ENCODE measurements at regions of chr4 and their contacts with region 1.

Region 1: GRCh38 chr4:3318561-3319021 is 25.8 kb downstream of the RGS12 start:
- DNase-seq: peak; percentile 54 to 91
- H3K4me3 ChIP-seq: no peak overlapping the region
- H3K27ac ChIP-seq: 0 out of 2 replicates have a peak overlapping the region, but pooled peaks have one; percentile 39
- H3K4me1 ChIP-seq: peaks cover 0 to 5% (median 1%) of the 10 kb centered on the region in 4 experiments; a peak in 2 of 7 replicates
- H3K27me3 ChIP-seq: no peaks in the 10 kb centered on the region
- CTCF ChIP-seq: peak in 2 of 3 experiments; percentile 99; a peak in 3 of 4 replicates
- EP300 ChIP-seq: peak in 1 of 2 experiments; percentile 55; a peak in 1 of 3 replicates
- POLR2A ChIP-seq: no peak
- RAD21 ChIP-seq: peak; percentile 73 to 78

Region 2: DNA sequence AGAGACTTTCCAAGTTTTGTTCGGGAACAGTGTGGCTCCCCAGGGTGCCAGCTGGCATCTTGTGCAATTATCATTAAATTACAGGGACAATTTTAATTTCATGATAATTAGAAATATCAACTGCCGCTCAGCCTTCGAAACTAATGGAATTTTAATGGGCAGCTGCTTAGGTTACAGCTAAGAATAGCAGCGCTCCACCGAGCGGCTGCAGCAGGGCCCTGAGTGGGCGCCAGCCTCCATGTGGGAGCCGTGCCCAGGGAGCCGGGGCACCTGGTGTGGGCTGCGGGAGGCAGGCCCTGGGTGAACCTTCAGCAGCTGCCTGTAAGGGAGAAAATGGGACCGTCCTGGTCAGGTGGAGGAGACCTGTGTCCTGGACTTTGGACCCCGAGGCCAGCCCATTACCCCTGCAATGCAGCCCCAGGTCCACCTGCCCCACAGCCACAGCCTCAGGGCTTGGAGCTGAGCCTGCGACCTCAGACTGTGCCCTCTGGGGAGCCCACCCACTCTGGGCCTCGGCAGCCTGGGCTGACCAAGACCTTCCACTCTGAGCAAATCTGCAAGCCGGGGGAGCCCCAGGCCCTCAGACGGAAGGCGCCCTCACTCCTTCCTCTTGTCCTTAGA is 48.5 kb before region 1 on chr4:
- CTCF ChIA-PET with region 1: interaction called, 10 read pairs
- POLR2A ChIA-PET with region 1: no interaction called
- DNase-seq: peak in 1 of 2 experiments; percentile 44
- H3K4me3 ChIP-seq: no peak overlapping the region
- H3K27ac ChIP-seq: no peak overlapping the region
- H3K4me1 ChIP-seq: peaks cover 0 to 6% (median 0%) of the 10 kb centered on the region in 4 experiments; a peak in 1 of 7 replicates
- H3K27me3 ChIP-seq: no peaks in the 10 kb centered on the region
- CTCF ChIP-seq: no peak
- EP300 ChIP-seq: no peak
- POLR2A ChIP-seq: no peak
- RAD21 ChIP-seq: no peak

Region 3: GRCh38 chr4:3305598-3306371 is 12.8 kb before region 1 on chr4:
- CTCF ChIA-PET with region 1: interaction called, 31 read pairs
- POLR2A ChIA-PET with region 1: interaction called, 3 read pairs
- DNase-seq: no peak
- H3K4me3 ChIP-seq: no peak overlapping the region
- H3K27ac ChIP-seq: no peak overlapping the region
- H3K4me1 ChIP-seq: peaks cover 0 to 18% (median 6%) of the 10 kb centered on the region in 4 experiments; a peak in 4 of 7 replicates
- H3K27me3 ChIP-seq: no peaks in the 10 kb centered on the region
- CTCF ChIP-seq: no peak
- EP300 ChIP-seq: no peak
- POLR2A ChIP-seq: no peak
- RAD21 ChIP-seq: no peak

Region 4: GRCh38 chr4:3346146-3346545 is 27.6 kb after region 1 on chr4:
- CTCF ChIA-PET with region 1: interaction called, 19 read pairs
- POLR2A ChIA-PET with region 1: no interaction called
- DNase-seq: no peak
- H3K4me3 ChIP-seq: no peak overlapping the region
- H3K27ac ChIP-seq: no peak overlapping the region
- H3K4me1 ChIP-seq: peaks cover 3 to 10% (median 5%) of the 10 kb centered on the region in 4 experiments; a peak in 5 of 7 replicates
- H3K27me3 ChIP-seq: no peaks in the 10 kb centered on the region
- CTCF ChIP-seq: peak in 2 of 3 experiments; percentile 76 to 78; a peak in 3 of 4 replicates
- EP300 ChIP-seq: no peak
- POLR2A ChIP-seq: no peak
- RAD21 ChIP-seq: peak; percentile 90 to 91

Region 5: DNA sequence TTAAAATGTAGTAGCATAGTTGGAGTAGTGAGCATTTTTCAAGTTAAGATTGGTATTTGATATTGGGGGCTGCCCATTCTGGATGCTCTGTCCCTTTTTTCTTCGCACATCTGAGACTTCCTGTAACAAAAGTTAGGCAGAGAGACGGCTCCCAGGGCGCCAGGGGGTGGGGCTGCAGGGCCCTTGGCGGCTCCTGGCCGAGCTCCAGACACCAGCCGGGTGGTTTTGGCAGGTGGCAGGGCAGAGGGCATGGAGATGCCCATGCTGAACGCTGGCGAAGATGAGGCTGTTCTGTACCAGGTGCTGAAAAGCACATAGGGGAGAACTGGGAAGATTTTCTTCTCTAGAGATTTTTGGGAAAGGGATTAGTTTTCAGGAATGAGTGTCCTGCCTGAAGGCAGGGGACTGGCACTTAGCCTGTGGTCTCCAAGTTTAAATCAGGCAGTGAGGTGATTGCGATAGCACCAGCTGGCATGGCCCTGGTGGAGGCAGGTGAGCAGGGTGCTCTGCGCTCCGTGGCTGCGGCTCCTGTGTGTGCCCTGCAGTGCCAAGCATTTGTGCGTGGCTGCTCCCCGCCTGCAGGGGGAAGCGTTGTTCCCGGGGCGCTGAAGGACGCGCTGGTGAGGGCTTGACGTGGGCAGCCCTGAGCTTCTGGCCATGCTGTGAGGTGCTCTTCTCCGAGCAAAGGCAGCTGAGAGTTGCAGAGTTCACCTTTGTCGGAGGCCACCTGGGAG is 99.6 kb after region 1 on chr4:
- CTCF ChIA-PET with region 1: interaction called, 13 read pairs
- POLR2A ChIA-PET with region 1: no interaction called
- DNase-seq: no peak
- H3K4me3 ChIP-seq: no peak overlapping the region
- H3K27ac ChIP-seq: no peak overlapping the region
- H3K4me1 ChIP-seq: no peaks in the 10 kb centered on the region; a peak in 3 of 7 replicates
- H3K27me3 ChIP-seq: no peaks in the 10 kb centered on the region
- CTCF ChIP-seq: peak in 2 of 3 experiments; percentile 45 to 74; a peak in 3 of 4 replicates
- EP300 ChIP-seq: no peak
- POLR2A ChIP-seq: no peak
- RAD21 ChIP-seq: peak; percentile 32 to 43; a peak in 3 of 4 replicates

Region 6: GRCh38 chr4:3436798-3437581 is 118.4 kb after region 1 on chr4:
- CTCF ChIA-PET with region 1: interaction called, 37 read pairs
- POLR2A ChIA-PET with region 1: no interaction called
- DNase-seq: no peak
- H3K4me3 ChIP-seq: no peak overlapping the region
- H3K27ac ChIP-seq: no peak overlapping the region
- H3K4me1 ChIP-seq: peaks cover 0 to 5% (median 2%) of the 10 kb centered on the region in 4 experiments; a peak in 3 of 7 replicates
- H3K27me3 ChIP-seq: no peaks in the 10 kb centered on the region; a peak in 1 of 7 replicates
- CTCF ChIP-seq: no peak
- EP300 ChIP-seq: no peak
- POLR2A ChIP-seq: no peak
- RAD21 ChIP-seq: no peak

Region 7: GRCh38 chr4:3452376-3452775 is 133.8 kb after region 1 on chr4:
- CTCF ChIA-PET with region 1: interaction called, 12 read pairs
- POLR2A ChIA-PET with region 1: no interaction called
- DNase-seq: no peak
- H3K4me3 ChIP-seq: no peak overlapping the region
- H3K27ac ChIP-seq: no peak overlapping the region
- H3K4me1 ChIP-seq: no peaks in the 10 kb centered on the region; a peak in 1 of 7 replicates
- H3K27me3 ChIP-seq: peaks cover 0 to 3% (median 0%) of the 10 kb centered on the region in 4 experiments; a peak in 5 of 7 replicates
- CTCF ChIP-seq: peak in 2 of 3 experiments; percentile 74 to 88; a peak in 3 of 4 replicates
- EP300 ChIP-seq: no peak
- POLR2A ChIP-seq: no peak
- RAD21 ChIP-seq: peak; percentile 35 to 49; a peak in 3 of 4 replicates